HEK293 (cell line): ENCODE measurements at regions of chr16 and their contacts with region 1.

Region 1: GRCh38 chr16:31395647-31396046 is 2.5 kb downstream of the ITGAD start:
- H3K4me3 ChIP-seq: no peak overlapping the region
- H3K27ac ChIP-seq: no peak overlapping the region
- H3K4me1 ChIP-seq: no peaks in the 10 kb centered on the region
- CTCF ChIP-seq: no peak

Region 2: GRCh38 chr16:31382485-31383161 is 13.0 kb before region 1 on chr16:
- CTCF ChIA-PET with region 1: interaction called, 10 read pairs
- POLR2A ChIA-PET with region 1: no interaction called
- H3K4me3 ChIP-seq: no peak overlapping the region
- H3K27ac ChIP-seq: no peak overlapping the region
- H3K4me1 ChIP-seq: peaks cover 7% of the 10 kb centered on the region
- CTCF ChIP-seq: peak; percentile 66; the same call in 1 of the 2 replicates